ENCODE measurements at regions of chr10 and their contacts with region 1.

Region 1: DNA sequence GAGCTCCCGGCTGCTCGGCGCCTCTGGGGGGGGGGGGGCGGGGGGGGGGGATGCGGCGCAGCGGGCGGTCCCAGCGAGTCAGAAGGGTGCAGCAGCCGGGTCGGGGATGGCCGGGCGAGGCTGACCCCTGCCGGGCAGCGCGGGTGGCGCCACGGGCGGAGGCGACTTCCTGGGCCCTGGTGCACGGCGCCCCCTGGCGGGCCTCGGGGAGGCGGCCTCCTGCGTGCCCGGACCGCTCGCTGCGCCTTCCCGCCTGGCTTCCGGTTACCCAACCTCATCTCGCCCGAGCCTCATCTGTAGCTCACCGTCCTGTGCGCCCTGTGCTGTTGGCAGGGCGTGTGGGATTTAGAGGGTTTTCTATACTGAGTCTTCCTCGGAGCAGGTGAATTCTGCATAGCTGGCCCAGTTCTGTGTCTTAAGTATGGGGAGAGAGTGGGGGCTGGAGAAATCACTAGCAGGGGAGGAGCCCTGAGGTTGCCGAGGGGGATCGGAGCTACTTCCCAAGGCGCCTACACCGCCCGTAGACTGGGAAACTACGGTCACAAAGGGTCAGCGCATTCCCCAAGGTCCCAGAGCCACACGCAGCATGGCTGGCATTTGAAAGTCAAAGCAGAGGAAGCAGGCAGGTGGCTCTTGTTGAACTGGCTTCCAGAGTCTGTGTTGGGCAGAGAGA is 28.3 kb upstream of the WDFY4 start:
- DNase-seq: peak; percentile 92 to 97 (median 97)
- ATAC-seq: peak; percentile 93 to 95
- H3K4me3 ChIP-seq: peak overlapping the region; percentile 37
- H3K27ac ChIP-seq: no peak overlapping the region
- H3K4me1 ChIP-seq: no peaks in the 10 kb centered on the region
- H3K27me3 ChIP-seq: no peaks in the 10 kb centered on the region

Region 2: GRCh38 chr10:48363617-48364355 is 292.6 kb before region 1 on chr10:
- intact Hi-C with region 1: loop called (anchors 2 to 10 kb)
- DNase-seq: no peak
- ATAC-seq: peak; percentile 63 to 67
- H3K4me3 ChIP-seq: no peak overlapping the region
- H3K27ac ChIP-seq: no peak overlapping the region
- H3K4me1 ChIP-seq: peaks cover under 1% of the 10 kb centered on the region
- H3K27me3 ChIP-seq: no peaks in the 10 kb centered on the region

Region 3: GRCh38 chr10:48551861-48552591 is 104.4 kb before region 1 on chr10:
- intact Hi-C with region 1: loop called (anchors 2 to 5 kb)
- DNase-seq: peak; percentile 37 to 78 (median 74)
- ATAC-seq: peak; percentile 56 to 62
- H3K4me3 ChIP-seq: no peak overlapping the region
- H3K27ac ChIP-seq: no peak overlapping the region
- H3K4me1 ChIP-seq: no peaks in the 10 kb centered on the region
- H3K27me3 ChIP-seq: no peaks in the 10 kb centered on the region

Region 4: DNA sequence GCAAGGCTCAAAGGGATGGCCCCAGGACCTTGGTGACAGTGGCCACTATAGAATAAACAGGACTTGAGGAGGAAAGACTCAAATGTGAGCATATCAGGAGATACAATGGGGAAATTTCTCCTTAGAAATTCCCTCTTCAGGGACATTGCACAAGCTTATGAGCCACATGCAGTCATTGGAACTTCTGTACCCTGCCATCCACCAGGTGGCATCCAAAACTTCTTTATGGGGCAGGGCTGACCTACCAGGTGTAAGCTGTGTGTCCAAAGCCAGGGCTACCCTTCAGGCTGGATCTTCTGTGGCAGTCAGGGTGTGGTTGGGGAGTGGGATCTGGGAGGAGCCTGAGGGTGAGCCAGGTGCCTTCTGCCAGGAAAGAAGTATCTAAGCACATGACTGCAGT is 319.8 kb after region 1 on chr10:
- intact Hi-C with region 1: loop called in 1 of 4 experiments (anchors 5 kb)
- DNase-seq: no peak
- ATAC-seq: peak; percentile 45 to 56
- H3K4me3 ChIP-seq: no peak overlapping the region
- H3K27ac ChIP-seq: no peak overlapping the region
- H3K4me1 ChIP-seq: no peaks in the 10 kb centered on the region
- H3K27me3 ChIP-seq: no peaks in the 10 kb centered on the region

Region 5: GRCh38 chr10:49153971-49154370 is 497.6 kb after region 1 on chr10:
- intact Hi-C with region 1: loop called in 1 of 4 experiments (anchors 10 kb)
- DNase-seq: no peak
- ATAC-seq: no peak
- H3K4me3 ChIP-seq: no peak overlapping the region
- H3K27ac ChIP-seq: no peak overlapping the region
- H3K4me1 ChIP-seq: peaks cover 3% of the 10 kb centered on the region
- H3K27me3 ChIP-seq: no peaks in the 10 kb centered on the region

Region 6: GRCh38 chr10:49164559-49165188 is 508.3 kb after region 1 on chr10:
- intact Hi-C with region 1: loop called in 3 of 4 experiments (anchors 5 to 10 kb)
- DNase-seq: peak in 1 of 3 donors; percentile 77
- ATAC-seq: peak; percentile 74 to 76
- H3K4me3 ChIP-seq: no peak overlapping the region
- H3K27ac ChIP-seq: no peak overlapping the region
- H3K4me1 ChIP-seq: no peaks in the 10 kb centered on the region
- H3K27me3 ChIP-seq: no peaks in the 10 kb centered on the region